ENCODE measurements at regions of chr10 and their contacts with region 1.

Region 1: GRCh38 chr10:78972947-78973900 is 95.5 kb upstream of the ZMIZ1 start:
- DNase-seq: peak; percentile 83
- H3K4me3 Mint-ChIP-seq: peak overlapping the region; percentile 49
- H3K27ac Mint-ChIP-seq: peak overlapping the region; percentile 43
- H3K4me1 Mint-ChIP-seq: peaks cover 22% of the 10 kb centered on the region
- H3K27me3 Mint-ChIP-seq: no peaks in the 10 kb centered on the region

Region 2: DNA sequence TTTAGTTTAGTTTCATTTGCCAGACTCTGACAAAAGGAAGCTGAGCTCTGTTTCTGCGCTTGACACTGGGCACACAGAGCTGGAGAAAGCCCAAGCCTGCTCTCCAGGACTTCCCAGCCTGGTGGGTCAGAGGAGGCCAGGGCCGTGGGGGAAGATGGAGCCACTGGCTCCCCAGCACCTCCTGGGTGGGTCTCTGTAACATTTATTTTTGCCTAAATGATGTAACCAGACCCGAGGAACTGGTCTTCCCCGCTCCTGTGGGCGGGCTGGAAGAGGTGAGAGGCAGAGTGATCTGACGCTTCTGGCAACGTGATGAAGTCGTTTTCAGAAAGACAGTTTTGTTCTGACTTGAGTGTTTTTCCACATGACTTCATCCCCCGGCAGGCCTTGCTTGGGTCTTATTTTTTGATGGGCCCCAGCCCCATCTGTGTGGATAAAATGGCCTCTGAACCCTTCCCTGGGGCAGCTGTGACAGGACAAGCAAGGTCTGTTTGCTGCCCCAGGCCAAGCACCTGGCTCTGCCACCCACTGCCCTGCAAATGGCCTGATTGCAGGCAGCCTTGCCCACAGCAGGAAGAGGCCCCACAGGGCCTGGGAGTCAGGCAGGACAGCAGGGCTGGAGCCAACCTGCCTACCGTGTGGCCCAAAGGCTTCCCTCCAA is 209.4 kb before region 1 on chr10:
- CTCF ChIA-PET with region 1: no interaction called
- POLR2A ChIA-PET with region 1: no interaction called
- intact Hi-C with region 1: loop called (anchors 5 kb)
- DNase-seq: peak; percentile 85
- H3K4me3 Mint-ChIP-seq: no peak overlapping the region
- H3K27ac Mint-ChIP-seq: peak overlapping the region; percentile 90
- H3K4me1 Mint-ChIP-seq: peaks cover 30% of the 10 kb centered on the region
- H3K27me3 Mint-ChIP-seq: peaks cover 3% of the 10 kb centered on the region

Region 3: DNA sequence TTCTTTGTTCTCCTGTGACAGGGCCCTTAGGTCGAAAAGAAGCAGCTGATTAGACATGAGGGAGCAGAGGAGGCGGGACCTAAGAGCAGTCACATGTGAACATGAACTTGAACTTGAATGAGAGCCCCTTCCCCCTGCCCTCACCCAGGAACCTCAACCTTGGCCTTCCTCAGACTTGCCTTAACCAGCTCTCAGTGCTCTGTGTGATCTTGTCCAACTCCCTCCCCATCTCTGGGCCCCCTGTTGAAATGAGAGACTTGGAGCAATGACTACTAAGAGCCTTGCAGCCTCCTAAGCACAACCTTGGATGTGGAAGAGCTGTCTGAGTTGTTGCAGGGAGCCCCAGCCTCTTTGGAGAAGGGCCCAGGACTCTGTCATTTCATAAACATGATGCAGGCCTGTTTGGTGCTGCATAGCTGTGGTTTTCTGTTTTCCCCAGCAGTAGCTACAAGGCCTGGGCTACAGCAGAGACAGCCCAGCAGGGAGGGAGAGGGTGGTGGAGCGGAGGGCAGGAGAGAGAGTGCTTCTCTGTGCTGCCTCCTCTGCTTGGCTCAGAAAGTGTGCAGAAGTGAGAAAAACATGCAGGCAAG is 28.4 kb before region 1 on chr10:
- CTCF ChIA-PET with region 1: no interaction called
- POLR2A ChIA-PET with region 1: no interaction called
- intact Hi-C with region 1: no loop called
- DNase-seq: no peak
- H3K4me3 Mint-ChIP-seq: no peak overlapping the region
- H3K27ac Mint-ChIP-seq: no peak overlapping the region
- H3K4me1 Mint-ChIP-seq: no peaks in the 10 kb centered on the region
- H3K27me3 Mint-ChIP-seq: no peaks in the 10 kb centered on the region

Region 4: GRCh38 chr10:78991187-78991586 is 18.0 kb after region 1 on chr10:
- CTCF ChIA-PET with region 1: interaction called, 12 read pairs
- POLR2A ChIA-PET with region 1: interaction called, 3 read pairs
- intact Hi-C with region 1: loop called (anchors 1 kb)
- DNase-seq: no peak
- H3K4me3 Mint-ChIP-seq: no peak overlapping the region
- H3K27ac Mint-ChIP-seq: no peak overlapping the region
- H3K4me1 Mint-ChIP-seq: peaks cover 10% of the 10 kb centered on the region
- H3K27me3 Mint-ChIP-seq: no peaks in the 10 kb centered on the region

Region 5: GRCh38 chr10:79047875-79048638 is 74.8 kb after region 1 on chr10:
- CTCF ChIA-PET with region 1: interaction called, 3 read pairs
- POLR2A ChIA-PET with region 1: no interaction called
- intact Hi-C with region 1: loop called (anchors 1 kb)
- DNase-seq: peak; percentile 79
- H3K4me3 Mint-ChIP-seq: peak overlapping the region; percentile 26
- H3K27ac Mint-ChIP-seq: peak overlapping the region; percentile 86
- H3K4me1 Mint-ChIP-seq: peaks cover 46% of the 10 kb centered on the region
- H3K27me3 Mint-ChIP-seq: no peaks in the 10 kb centered on the region

Region 6: DNA sequence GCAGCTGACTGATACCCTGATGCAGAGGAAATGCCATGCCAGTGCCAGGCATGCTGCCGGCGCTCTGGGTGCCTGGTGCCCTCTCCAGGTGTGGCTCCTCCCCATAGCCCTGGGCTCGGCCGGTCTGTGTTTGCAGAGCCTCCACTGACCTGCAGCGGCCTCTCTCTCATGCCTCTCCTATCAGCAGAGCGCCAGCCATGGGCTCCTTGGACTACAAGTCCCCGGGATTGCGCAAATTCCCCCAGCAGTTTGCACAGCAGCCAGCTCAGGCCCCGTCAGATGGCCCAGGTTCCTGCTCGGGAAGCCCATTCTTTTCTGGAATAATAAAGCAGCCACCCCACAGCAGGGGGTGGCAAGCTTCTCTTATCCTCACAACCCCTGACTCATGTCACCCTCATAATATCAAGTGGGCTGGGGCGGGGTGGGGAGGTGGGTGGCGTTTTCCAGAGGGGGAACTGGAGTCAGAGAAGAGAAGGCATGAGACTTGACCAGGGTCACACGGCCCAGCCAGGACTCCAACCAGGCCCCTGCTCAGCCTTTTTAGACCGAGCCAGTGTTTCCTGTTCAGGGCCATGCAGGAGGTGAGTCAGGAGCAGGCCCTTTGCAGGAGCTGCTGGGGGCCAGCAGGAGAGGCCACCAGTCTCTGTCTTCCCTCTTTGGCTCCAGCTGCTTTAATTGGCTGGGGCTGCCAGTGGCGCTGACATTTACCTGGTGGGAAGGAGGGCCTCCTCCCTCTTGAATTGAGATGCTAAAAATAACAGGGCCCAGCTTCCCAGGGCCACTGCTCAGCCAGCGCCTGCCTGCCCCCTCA is 154.1 kb after region 1 on chr10:
- CTCF ChIA-PET with region 1: no interaction called
- POLR2A ChIA-PET with region 1: no interaction called
- intact Hi-C with region 1: no loop called
- DNase-seq: no peak
- H3K4me3 Mint-ChIP-seq: no peak overlapping the region
- H3K27ac Mint-ChIP-seq: no peak overlapping the region
- H3K4me1 Mint-ChIP-seq: no peaks in the 10 kb centered on the region
- H3K27me3 Mint-ChIP-seq: no peaks in the 10 kb centered on the region

Region 7: GRCh38 chr10:79322616-79323543 is 349.7 kb after region 1 on chr10:
- CTCF ChIA-PET with region 1: no interaction called
- POLR2A ChIA-PET with region 1: no interaction called
- intact Hi-C with region 1: loop called (anchors 10 kb)
- DNase-seq: peak; percentile 91
- H3K4me3 Mint-ChIP-seq: peak overlapping the region; percentile 39
- H3K27ac Mint-ChIP-seq: peak overlapping the region; percentile 92
- H3K4me1 Mint-ChIP-seq: peaks cover 69% of the 10 kb centered on the region
- H3K27me3 Mint-ChIP-seq: no peaks in the 10 kb centered on the region